Cardiac septum (tissue), 1 donor: ENCODE measurements at regions of chr22 and their contacts with region 1.

Region 1: GRCh38 chr22:25362215-25362882 is 142.9 kb downstream of the CRYBB2 start:
- DNase-seq: peak; percentile 79

Region 2: GRCh38 chr22:25235547-25236290 is 126.6 kb before region 1 on chr22:
- intact Hi-C with region 1: no loop called
- DNase-seq: peak; percentile 83

Region 3: GRCh38 chr22:25404928-25405816 is 42.8 kb after region 1 on chr22:
- intact Hi-C with region 1: loop called (anchors 5 kb)
- DNase-seq: peak; percentile 93

Region 4: GRCh38 chr22:25419237-25420113 is 57.1 kb after region 1 on chr22:
- intact Hi-C with region 1: loop called (anchors 5 kb)
- DNase-seq: no peak

Region 5: GRCh38 chr22:25447686-25448434 is 85.5 kb after region 1 on chr22:
- intact Hi-C with region 1: loop called (anchors 5 kb)
- DNase-seq: peak; percentile 93